Ascending aorta (tissue), 2 donors: ENCODE measurements at regions of chr9 and their contacts with region 1.

Region 1: DNA sequence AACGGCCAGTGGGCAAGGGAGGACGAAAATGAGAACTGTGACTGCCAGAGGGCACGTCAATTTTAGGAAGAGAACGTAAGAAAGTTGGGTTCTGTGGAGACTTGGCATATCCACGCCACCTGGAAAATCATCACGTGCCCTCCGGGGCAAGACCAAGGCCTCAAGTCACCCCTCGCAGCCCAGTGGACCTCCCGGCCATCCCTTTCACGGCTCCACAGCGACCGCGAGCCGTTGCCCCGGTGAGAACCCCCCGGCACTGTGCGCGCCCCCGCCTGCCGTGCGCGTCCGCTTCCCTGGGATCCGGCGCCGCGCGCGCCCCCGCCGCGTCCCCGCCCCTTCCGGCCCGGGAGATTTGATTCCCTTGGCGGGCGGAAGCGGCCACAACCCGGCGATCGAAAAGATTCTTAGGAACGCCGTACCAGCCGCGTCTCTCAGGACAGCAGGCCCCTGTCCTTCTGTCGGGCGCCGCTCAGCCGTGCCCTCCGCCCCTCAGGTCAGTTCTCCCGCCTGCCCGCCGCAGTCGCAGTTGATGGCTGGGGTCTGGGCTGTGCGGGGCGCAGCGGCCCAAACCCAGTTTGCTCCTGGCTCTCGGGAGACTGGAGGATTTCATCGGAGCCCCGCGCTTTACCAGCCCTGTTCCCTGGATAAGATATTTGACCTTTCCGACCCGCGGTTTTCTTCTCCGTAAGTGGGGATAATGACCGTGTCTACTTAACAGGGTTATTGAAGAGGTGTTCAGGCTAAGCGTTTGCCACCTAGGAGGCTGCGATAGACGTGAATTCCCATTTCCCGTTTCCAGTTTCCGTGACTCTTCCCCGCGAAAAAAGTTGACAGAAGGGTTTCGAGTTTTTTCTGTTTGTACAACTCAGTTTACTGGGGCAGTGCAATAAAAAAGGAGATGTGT is at the start of gene MELK:
- DNase-seq: peak; percentile 19 to 85
- H3K4me3 ChIP-seq: peak within 1 kb of the TSS; percentile 78 to 86
- H3K27ac ChIP-seq: peak within 1 kb of the TSS; percentile 44 to 73
- H3K4me1 ChIP-seq: peaks cover 6 to 9% of the 10 kb centered on the region in 2 donors
- H3K27me3 ChIP-seq: no peaks in the 10 kb centered on the region
- CTCF ChIP-seq: no peak
- total RNA-seq, gene MELK: not detected

Region 2: GRCh38 chr9:36400332-36401163 is 172.2 kb before region 1 on chr9:
- intact Hi-C with region 1: loop called (anchors 5 kb)
- DNase-seq: peak; percentile 38 to 90
- H3K4me3 ChIP-seq: peak overlapping the region; percentile 64 to 79
- H3K27ac ChIP-seq: peak overlapping the region; percentile 87 to 94
- H3K4me1 ChIP-seq: peaks cover 0 to 9% of the 10 kb centered on the region in 2 donors
- H3K27me3 ChIP-seq: no peaks in the 10 kb centered on the region
- CTCF ChIP-seq: peak in 1 of 3 experiments; percentile 17

Region 3: DNA sequence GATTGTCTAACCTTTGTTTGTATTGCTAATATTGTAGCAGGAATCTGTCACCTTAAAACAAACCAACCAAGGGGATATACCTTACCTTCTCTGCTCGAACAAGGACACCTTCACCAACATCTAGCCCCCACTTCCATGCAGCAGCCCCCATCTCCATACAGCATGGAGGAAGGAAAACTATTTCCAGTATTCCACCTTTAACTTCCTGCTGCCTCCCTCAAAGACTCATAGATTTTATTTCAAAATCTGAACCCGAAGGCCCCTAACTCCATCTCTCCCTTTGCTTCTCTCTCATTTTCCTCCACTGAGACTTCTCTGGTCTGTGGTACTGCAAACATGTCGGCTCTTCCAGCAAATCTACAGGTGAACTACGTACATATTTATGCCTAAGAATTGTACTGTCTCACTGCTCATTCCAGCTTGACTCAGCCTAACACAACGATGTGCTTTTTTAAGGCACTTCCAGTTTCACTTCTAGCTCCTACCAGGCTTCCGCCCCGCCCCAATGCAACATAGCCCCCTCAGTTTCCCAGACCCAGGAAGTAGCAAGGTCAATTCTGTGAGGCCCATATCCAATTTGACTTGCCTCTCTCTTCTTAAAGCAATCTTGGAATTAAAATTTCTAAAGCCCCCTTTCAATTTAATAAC is 102.0 kb before region 1 on chr9:
- intact Hi-C with region 1: no loop called
- DNase-seq: no peak
- H3K4me3 ChIP-seq: peak overlapping the region; percentile 12 to 45
- H3K27ac ChIP-seq: peak overlapping the region; percentile 19 to 38
- H3K4me1 ChIP-seq: no peaks in the 10 kb centered on the region
- H3K27me3 ChIP-seq: no peaks in the 10 kb centered on the region
- CTCF ChIP-seq: no peak